CD14-positive monocyte (primary cell): ENCODE measurements at regions of chr6 and their contacts with region 1.

Region 1: GRCh38 chr6:122730775-122731386 is 48.6 kb upstream of the FABP7 start:
- DNase-seq: peak; percentile 23 to 53 (median 42)
- H3K4me3 ChIP-seq: no peak overlapping the region
- H3K4me3 Mint-ChIP-seq: no peak overlapping the region
- H3K27ac ChIP-seq: no peak overlapping the region
- H3K27ac Mint-ChIP-seq: no peak overlapping the region
- H3K4me1 ChIP-seq: no peaks in the 10 kb centered on the region
- H3K4me1 Mint-ChIP-seq: peaks cover 4% of the 10 kb centered on the region
- H3K27me3 ChIP-seq: peaks cover 6 to 7% of the 10 kb centered on the region in 2 donors
- H3K27me3 Mint-ChIP-seq: peaks cover 12 to 24% (median 16%) of the 10 kb centered on the region in 3 donors
- CTCF ChIP-seq: peak; percentile 85

Region 2: GRCh38 chr6:122839477-122839876 is 108.6 kb after region 1 on chr6:
- intact Hi-C with region 1: loop called (anchors 1 to 5 kb)
- DNase-seq: peak; percentile 42 to 60 (median 55)
- H3K4me3 ChIP-seq: no peak overlapping the region
- H3K4me3 Mint-ChIP-seq: no peak overlapping the region
- H3K27ac ChIP-seq: no peak overlapping the region
- H3K27ac Mint-ChIP-seq: no peak overlapping the region
- H3K4me1 ChIP-seq: no peaks in the 10 kb centered on the region
- H3K4me1 Mint-ChIP-seq: no peaks in the 10 kb centered on the region
- H3K27me3 ChIP-seq: no peaks in the 10 kb centered on the region
- H3K27me3 Mint-ChIP-seq: peaks cover 7 to 19% (median 16%) of the 10 kb centered on the region in 3 donors
- CTCF ChIP-seq: peak; percentile 64

Region 3: GRCh38 chr6:123316733-123317323 is 585.9 kb after region 1 on chr6:
- intact Hi-C with region 1: loop called in 1 of 2 experiments (anchors 10 kb)
- DNase-seq: peak in 1 of 3 donors; percentile 3
- H3K4me3 ChIP-seq: no peak overlapping the region
- H3K4me3 Mint-ChIP-seq: no peak overlapping the region
- H3K27ac ChIP-seq: no peak overlapping the region
- H3K27ac Mint-ChIP-seq: no peak overlapping the region
- H3K4me1 ChIP-seq: no peaks in the 10 kb centered on the region
- H3K4me1 Mint-ChIP-seq: no peaks in the 10 kb centered on the region
- H3K27me3 ChIP-seq: no peaks in the 10 kb centered on the region
- H3K27me3 Mint-ChIP-seq: peaks cover 0 to 3% (median 3%) of the 10 kb centered on the region in 3 donors
- CTCF ChIP-seq: peak; percentile 74